Aorta (tissue), 5 donors: ENCODE measurements at regions of chr20 and their contacts with region 1.

Region 1: DNA sequence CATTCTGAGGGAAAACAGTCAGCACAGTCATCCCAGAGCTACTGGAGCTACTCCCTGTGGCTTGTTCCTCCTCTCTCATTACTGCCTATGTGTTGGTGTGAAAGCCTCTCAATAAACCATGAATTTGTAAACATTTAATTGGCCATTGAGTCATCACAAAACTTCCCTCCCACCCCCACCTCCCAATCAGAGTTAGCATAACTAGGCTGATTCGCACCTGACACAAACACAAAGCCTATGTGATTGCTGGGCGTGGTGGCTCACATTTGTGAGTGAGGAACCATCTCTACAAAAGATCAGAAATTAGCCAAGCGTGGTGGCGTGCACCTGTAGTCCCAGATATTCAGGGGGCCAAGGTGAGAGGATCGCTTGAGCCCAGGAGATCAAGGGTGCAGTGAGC is 17.1 kb upstream of the SNTA1 start:
- DNase-seq: no peak
- ATAC-seq: no peak
- H3K4me3 ChIP-seq: no peak overlapping the region
- H3K27ac ChIP-seq: no peak overlapping the region
- H3K4me1 ChIP-seq: no peaks in the 10 kb centered on the region
- H3K27me3 ChIP-seq: no peaks in the 10 kb centered on the region

Region 2: GRCh38 chr20:33423141-33423834 is 37.4 kb before region 1 on chr20:
- intact Hi-C with region 1: no loop called
- DNase-seq: peak; percentile 92 to 94
- ATAC-seq: peak; percentile 94
- H3K4me3 ChIP-seq: no peak overlapping the region
- H3K27ac ChIP-seq: peak overlapping the region; percentile 62 to 71
- H3K4me1 ChIP-seq: peaks cover 0 to 4% of the 10 kb centered on the region in 2 donors
- H3K27me3 ChIP-seq: no peaks in the 10 kb centered on the region

Region 3: DNA sequence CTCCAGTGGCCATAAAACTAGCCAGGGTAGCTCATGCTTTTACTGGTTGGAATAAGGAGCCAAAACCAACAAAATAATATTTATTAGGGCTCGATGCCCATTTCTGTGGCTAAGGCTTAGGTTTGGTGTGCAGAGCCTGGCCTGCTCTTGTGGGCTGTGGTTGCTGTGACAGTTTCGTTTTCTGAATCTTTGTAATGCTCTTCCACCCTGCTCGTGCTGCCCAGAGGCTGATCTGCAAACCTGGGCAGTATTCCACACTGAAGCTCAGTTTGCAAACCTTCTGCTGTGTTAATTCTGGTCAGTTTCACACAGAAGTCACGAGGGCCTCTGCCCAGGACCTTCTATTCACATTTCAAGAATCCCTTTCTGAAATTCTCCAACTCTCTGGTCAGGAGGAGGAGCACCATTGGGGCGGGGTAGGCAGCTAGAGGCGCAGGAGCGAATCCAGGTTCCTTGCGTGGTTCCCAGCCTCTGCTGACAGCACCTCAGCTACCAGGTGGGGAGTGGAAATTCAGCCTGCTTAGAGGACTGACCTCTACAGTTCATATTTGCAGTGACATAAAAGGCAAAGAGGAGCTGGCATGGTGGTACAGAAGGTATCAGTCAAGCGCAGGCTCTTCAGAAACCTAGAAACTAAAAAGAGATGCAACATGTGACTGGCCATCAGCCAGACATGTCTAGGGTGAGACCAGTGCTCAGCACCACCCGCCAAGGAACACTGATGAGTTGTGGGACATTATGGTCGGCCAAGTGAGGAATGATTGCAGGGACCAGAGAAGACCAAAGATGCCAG is 187.1 kb after region 1 on chr20:
- intact Hi-C with region 1: loop called (anchors 5 kb)
- DNase-seq: peak in 1 of 2 donors; percentile 62
- ATAC-seq: peak; percentile 82
- H3K4me3 ChIP-seq: no peak overlapping the region
- H3K27ac ChIP-seq: peak overlapping the region in 1 of 2 donors; percentile 28
- H3K4me1 ChIP-seq: peaks cover 0 to 4% of the 10 kb centered on the region in 2 donors
- H3K27me3 ChIP-seq: no peaks in the 10 kb centered on the region

Region 4: DNA sequence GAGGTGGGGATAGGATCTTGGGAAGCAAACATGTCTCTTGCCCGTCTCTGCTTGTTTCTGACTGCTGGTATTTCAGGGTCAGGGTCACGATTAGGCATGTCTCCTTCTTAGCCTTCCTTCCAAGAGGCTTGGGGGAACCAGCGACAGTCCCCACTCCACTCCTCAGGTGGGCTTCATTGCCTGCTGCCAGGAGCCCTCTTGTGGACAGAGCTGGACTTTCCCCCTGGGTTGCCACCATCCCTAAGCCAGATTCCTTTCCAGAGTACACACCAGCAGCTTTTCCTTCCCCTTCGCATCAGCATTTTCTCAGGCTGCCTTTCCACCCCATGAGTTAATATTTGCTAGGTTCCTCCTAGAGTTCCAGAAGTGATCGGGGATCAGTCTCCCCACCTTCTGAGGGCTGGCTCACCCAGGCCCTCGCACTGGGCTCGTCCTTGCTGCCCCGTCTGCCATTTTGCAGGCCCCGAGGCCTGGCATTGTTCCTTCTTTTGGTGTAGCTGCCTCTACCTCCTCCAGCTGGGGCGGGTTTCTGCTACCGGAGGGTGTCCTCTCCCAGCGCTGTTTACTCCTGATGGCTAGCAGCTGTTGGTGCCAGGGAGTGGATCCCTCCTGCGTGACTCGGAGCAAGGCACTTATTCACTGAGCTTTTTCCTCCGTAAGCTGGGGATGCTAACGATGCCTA is 192.6 kb after region 1 on chr20:
- intact Hi-C with region 1: loop called (anchors 5 kb)
- DNase-seq: peak; percentile 63 to 87
- ATAC-seq: peak; percentile 62
- H3K4me3 ChIP-seq: no peak overlapping the region
- H3K27ac ChIP-seq: no peak overlapping the region
- H3K4me1 ChIP-seq: no peaks in the 10 kb centered on the region
- H3K27me3 ChIP-seq: no peaks in the 10 kb centered on the region

Region 5: DNA sequence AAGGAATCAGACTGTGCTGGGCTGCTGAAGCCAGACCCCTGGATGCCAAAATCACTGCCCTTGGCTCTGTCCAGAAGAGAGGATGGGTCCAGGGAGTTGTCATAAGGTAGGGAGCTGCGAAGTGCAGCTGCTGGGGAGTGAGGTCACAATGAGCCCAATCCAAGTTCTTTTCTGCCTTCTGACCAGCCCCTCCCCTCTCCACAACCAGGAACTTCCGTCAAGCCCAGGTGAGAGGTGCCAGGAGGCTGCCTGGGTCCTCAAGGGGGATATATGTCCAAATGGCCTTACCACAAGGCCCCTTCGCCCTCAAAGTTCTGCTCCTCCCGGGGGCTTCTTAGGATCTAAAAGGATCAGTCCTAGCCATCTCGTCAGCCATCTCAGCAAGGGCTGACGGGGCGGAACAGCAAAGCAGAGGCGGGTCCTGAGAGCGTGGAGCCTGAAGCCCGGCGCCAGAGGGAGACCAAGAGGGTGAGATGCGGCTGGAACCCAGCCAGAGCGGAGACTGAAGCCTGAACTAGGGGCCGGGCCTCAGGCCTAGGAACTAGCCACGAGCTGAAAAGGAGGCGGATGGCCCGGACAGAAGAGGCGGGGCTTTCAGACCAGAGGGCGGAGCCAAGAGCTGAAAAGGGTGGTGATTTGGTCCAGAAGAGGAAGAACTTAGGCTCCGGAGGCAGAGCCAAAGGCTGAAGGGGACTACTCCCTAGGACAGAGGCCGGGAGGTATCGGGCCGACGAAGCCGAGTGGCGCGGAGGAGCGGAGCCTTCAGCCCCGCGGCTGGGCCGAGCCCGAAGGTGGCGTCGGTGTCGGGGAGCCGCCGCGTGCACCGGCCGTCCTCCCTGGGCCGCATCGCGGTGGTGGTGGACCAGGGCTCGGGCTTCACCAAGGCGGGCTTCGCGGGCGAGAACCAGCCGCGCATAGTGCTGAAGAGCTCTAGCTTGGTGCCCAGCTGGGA is 205.9 kb after region 1 on chr20 and contains the start of gene ACTL10:
- intact Hi-C with region 1: loop called in 1 of 2 experiments (anchors 5 kb)
- DNase-seq: peak; percentile 99
- ATAC-seq: peak; percentile 87
- H3K4me3 ChIP-seq: peak within 1 kb of the TSS; percentile 12 to 28
- H3K27ac ChIP-seq: peak within 1 kb of the TSS in 1 of 2 donors; percentile 85
- H3K4me1 ChIP-seq: no peaks in the 10 kb centered on the region
- H3K27me3 ChIP-seq: no peaks in the 10 kb centered on the region
- total RNA-seq, gene ACTL10: 0.96 to 1.2 TPM